ENCODE measurements at regions of chr3 and their contacts with region 1.

Region 1: DNA sequence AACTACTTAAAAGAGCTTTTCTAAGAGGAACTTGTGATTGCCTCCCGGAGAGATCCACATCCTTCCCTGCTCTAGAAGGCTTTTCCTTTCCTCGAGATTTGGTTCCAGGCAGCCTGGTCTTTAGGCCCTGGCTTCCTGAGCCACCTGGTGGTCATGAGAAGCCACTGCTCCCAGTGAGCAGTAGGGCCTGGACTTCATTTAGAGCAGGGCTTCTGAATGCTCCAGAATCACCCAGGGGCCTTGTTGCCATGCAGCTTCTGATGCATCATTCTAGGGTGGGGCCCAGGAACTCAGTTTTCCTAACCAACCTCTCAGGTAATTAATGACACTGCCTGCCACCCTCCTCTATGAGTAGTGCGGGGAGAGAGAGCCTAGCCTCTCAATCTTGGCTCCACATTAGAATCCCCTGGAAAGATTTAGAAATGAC is 29.6 kb downstream of the PSMD6 start:
- DNase-seq: peak; percentile 87
- H3K4me3 Mint-ChIP-seq: no peak overlapping the region
- H3K27ac Mint-ChIP-seq: peak overlapping the region; percentile 15
- H3K4me1 Mint-ChIP-seq: peaks cover 17% of the 10 kb centered on the region
- H3K27me3 Mint-ChIP-seq: no peaks in the 10 kb centered on the region

Region 2: GRCh38 chr3:63933459-63933858 is 60.2 kb before region 1 on chr3:
- intact Hi-C with region 1: no loop called
- DNase-seq: no peak
- H3K4me3 Mint-ChIP-seq: peak overlapping the region; percentile 26
- H3K27ac Mint-ChIP-seq: peak overlapping the region; percentile 58
- H3K4me1 Mint-ChIP-seq: peaks cover 58% of the 10 kb centered on the region
- H3K27me3 Mint-ChIP-seq: no peaks in the 10 kb centered on the region

Region 3: DNA sequence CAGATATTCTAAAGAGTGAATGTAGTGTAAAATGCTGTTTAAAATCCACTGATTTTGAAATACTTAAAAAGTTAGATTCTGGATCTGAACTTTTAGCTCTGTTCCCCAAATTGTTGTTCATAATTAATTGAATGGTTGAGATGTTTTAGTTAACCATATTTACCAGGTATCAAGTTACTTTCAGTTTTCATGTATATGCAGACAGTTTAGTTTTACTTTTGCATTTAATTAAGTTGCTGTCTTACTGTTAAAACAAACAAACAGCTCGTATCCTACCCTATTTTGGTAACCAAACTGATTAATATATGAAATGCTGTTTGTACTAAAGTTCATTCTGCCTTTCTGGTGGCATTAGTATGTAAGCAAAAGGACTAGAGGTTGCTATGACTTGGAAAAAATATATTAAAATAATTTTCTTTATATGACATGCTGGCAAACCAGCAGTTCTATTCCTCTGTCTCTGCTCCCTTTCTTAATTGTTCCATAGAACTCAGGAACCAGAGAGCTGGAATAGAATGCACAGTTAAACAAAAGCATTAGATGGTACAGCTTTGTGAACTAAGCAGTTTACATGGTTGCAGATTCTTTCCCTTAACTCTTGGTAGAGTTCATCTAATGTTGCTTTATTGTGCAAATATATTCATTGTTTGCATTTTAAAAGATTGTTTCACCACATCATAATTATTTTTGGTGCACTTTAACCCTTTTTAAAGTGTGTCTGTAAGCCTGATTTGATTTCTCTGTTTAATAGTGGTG is 42.0 kb before region 1 on chr3:
- intact Hi-C with region 1: loop called (anchors 5 kb)
- DNase-seq: no peak
- H3K4me3 Mint-ChIP-seq: peak overlapping the region; percentile 71
- H3K27ac Mint-ChIP-seq: peak overlapping the region; percentile 74
- H3K4me1 Mint-ChIP-seq: peaks cover 46% of the 10 kb centered on the region
- H3K27me3 Mint-ChIP-seq: no peaks in the 10 kb centered on the region